ENCODE measurements at regions of chr11 and their contacts with region 1.

Region 1: GRCh38 chr11:10293423-10294289 is at the start of gene SBF2:
- DNase-seq: no peak
- ATAC-seq: peak; percentile 70
- H3K4me3 ChIP-seq: peak within 1 kb of the TSS; percentile 73
- H3K27ac ChIP-seq: no peak within 1 kb of the TSS
- H3K4me1 ChIP-seq: peaks cover 13% of the 10 kb centered on the region
- H3K27me3 ChIP-seq: peaks cover 8 to 27% of the 10 kb centered on the region in 2 experiments
- CTCF ChIP-seq: no peak
- EP300 ChIP-seq: no peak
- POLR2A ChIP-seq: peak; percentile 42; the same call in 1 of the 2 replicates
- RAD21 ChIP-seq: no peak
- polyA plus RNA-seq, gene SBF2: 0.24 to 0.26 TPM

Region 2: GRCh38 chr11:10155793-10156490 is 137.7 kb before region 1 on chr11:
- CTCF ChIA-PET with region 1: no interaction called
- POLR2A ChIA-PET with region 1: no interaction called
- RAD21 ChIA-PET with region 1: no interaction called
- SMC1A ChIA-PET with region 1: no interaction called
- in situ Hi-C with region 1: no loop called
- intact Hi-C with region 1: no loop called
- DNase-seq: no peak
- ATAC-seq: no peak
- H3K4me3 ChIP-seq: no peak overlapping the region
- H3K27ac ChIP-seq: no peak overlapping the region
- H3K4me1 ChIP-seq: no peaks in the 10 kb centered on the region
- H3K27me3 ChIP-seq: no peaks in the 10 kb centered on the region
- CTCF ChIP-seq: no peak
- EP300 ChIP-seq: no peak
- POLR2A ChIP-seq: no peak
- RAD21 ChIP-seq: no peak

Region 3: DNA sequence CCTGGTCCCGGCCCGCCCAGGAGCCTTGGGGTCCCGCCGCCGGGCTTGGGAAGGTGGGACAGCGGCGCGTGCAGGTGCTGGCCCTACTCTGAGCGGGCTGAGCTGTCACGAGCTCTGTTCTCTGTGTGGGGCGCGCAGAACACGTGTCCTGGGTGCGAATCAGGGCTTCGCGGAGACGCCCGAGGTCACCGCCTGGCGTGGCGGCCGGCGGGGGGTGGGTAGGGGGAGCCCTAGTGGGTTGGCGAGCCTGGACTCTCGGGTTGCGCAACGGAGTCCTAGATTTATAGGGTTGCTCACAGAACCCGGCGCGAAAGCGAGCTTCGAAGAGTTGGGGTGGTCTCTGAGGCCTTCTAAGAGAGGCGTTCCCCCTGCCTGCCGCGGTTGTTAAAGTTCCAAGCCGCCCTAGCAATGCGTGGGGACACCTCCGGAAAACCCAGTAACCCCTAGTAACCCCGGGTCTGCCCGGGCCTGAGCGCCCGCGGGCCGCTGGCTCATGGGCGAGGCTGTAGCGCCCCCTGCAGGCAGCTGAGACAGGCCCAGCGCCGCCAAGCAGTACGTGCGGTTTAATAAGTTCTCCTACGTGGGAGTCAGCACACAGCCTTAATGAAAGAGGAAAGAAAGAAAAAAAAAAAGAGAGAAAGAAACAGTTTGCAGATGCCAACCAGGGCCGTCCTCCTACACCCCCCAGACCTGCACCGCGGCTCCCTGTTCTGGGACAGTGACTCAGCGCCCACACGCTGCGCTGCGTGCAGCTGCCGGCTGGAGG is 14.0 kb after region 1 on chr11:
- CTCF ChIA-PET with region 1: interaction called, 36 read pairs
- POLR2A ChIA-PET with region 1: interaction called, 3 read pairs
- RAD21 ChIA-PET with region 1: interaction called, 9 read pairs
- SMC1A ChIA-PET with region 1: interaction called, 20 read pairs
- in situ Hi-C with region 1: no loop called
- intact Hi-C with region 1: no loop called
- DNase-seq: peak; percentile 60
- ATAC-seq: peak; percentile 84
- H3K4me3 ChIP-seq: peak overlapping the region; percentile 48; the same call in 1 of the 2 replicates
- H3K27ac ChIP-seq: peak overlapping the region; percentile 20; the same call in 1 of the 2 replicates
- H3K4me1 ChIP-seq: peaks cover 47% of the 10 kb centered on the region
- H3K27me3 ChIP-seq: peaks cover 32 to 41% of the 10 kb centered on the region in 2 experiments
- CTCF ChIP-seq: peak; percentile 78 to 89 (median 87)
- EP300 ChIP-seq: 0 out of 4 replicates have a peak, but pooled peaks of 1 of the 2 experiments have one; percentile 16
- POLR2A ChIP-seq: no peak; the same call in 1 of the 2 replicates
- RAD21 ChIP-seq: peak; percentile 86

Measured in GM12878 (cell line).